GM13977 (cell line): ENCODE measurements at regions of chr4 and their contacts with region 1.

Region 1: DNA sequence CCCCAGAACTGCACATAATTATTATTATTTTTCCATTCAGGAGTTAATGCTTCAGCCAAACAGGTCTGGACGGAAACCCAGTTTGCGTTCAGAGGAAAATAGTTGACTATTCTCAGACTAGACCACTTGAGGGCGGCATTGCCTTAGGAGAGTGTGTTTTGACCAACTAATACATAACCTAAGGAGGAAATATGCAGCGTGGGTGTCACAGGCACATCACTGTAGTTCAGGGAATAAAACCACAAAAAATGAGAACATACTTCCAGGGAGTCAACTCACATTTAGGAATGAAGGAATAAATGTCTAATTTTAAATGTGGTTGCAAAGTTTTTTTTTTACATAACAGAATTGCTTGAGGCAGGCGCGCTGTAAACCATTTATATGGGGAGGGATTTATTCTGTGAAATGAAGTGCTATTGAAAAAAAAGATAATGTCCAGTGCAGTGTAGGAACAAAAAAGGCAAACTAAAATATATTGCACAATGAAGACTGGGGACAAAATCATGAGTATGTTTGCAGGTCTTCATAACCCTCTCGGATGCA is 93.3 kb downstream of the SYNPO2 start:
- DNase-seq: peak; percentile 76
- CTCF ChIP-seq: peak; percentile 69

Region 2: GRCh38 chr4:119300101-119300978 is 318.4 kb after region 1 on chr4:
- in situ Hi-C with region 1: loop called (anchors 10 kb)
- DNase-seq: peak; percentile 86
- CTCF ChIP-seq: no peak